CD8-positive, alpha-beta memory T cell (primary cell): ENCODE measurements at regions of chr1 and their contacts with region 1.

Region 1: GRCh38 chr1:2133039-2133878 is 61.3 kb downstream of the FAAP20 start:
- DNase-seq: peak; percentile 97 to 99 (median 97)
- H3K4me3 ChIP-seq: peak overlapping the region; percentile 53
- H3K4me3 Mint-ChIP-seq: peak overlapping the region; percentile 80 to 94 (median 83)
- H3K27ac ChIP-seq: peak overlapping the region; percentile 64
- H3K27ac Mint-ChIP-seq: peak overlapping the region; percentile 86 to 97 (median 94)
- H3K4me1 ChIP-seq: peaks cover 10% of the 10 kb centered on the region
- H3K4me1 Mint-ChIP-seq: peaks cover 15 to 42% (median 21%) of the 10 kb centered on the region in 3 donors
- H3K27me3 ChIP-seq: no peaks in the 10 kb centered on the region
- H3K27me3 Mint-ChIP-seq: no peaks in the 10 kb centered on the region

Region 2: GRCh38 chr1:2148691-2149090 is 15.4 kb after region 1 on chr1:
- CTCF ChIA-PET with region 1: interaction called, 20 read pairs
- POLR2A ChIA-PET with region 1: interaction called, 11 read pairs
- DNase-seq: peak; percentile 45 to 82 (median 78)
- H3K4me3 ChIP-seq: peak overlapping the region; percentile 50
- H3K4me3 Mint-ChIP-seq: no peak overlapping the region
- H3K27ac ChIP-seq: peak overlapping the region; percentile 40
- H3K27ac Mint-ChIP-seq: no peak overlapping the region
- H3K4me1 ChIP-seq: peaks cover 38% of the 10 kb centered on the region
- H3K4me1 Mint-ChIP-seq: peaks cover 7 to 27% (median 19%) of the 10 kb centered on the region in 3 donors
- H3K27me3 ChIP-seq: no peaks in the 10 kb centered on the region
- H3K27me3 Mint-ChIP-seq: no peaks in the 10 kb centered on the region

Region 3: GRCh38 chr1:2212542-2213491 is 79.6 kb after region 1 on chr1:
- CTCF ChIA-PET with region 1: no interaction called
- POLR2A ChIA-PET with region 1: no interaction called
- DNase-seq: peak in 4 of 5 donors; percentile 48 to 82 (median 67)
- H3K4me3 ChIP-seq: peak overlapping the region; percentile 36
- H3K4me3 Mint-ChIP-seq: peak overlapping the region in 6 of 7 donors; percentile 32 to 62 (median 52)
- H3K27ac ChIP-seq: peak overlapping the region; percentile 53
- H3K27ac Mint-ChIP-seq: peak overlapping the region in 4 of 8 donors; percentile 12 to 71 (median 52)
- H3K4me1 ChIP-seq: peaks cover 15% of the 10 kb centered on the region
- H3K4me1 Mint-ChIP-seq: peaks cover 0 to 9% (median 0%) of the 10 kb centered on the region in 3 donors
- H3K27me3 ChIP-seq: no peaks in the 10 kb centered on the region
- H3K27me3 Mint-ChIP-seq: no peaks in the 10 kb centered on the region